K562 (cell line): ENCODE measurements at regions of chr22 and their contacts with region 1.

Region 1: GRCh38 chr22:23539135-23539838 is 40.8 kb downstream of the IGLL1 start:
- DNase-seq: peak; percentile 43 to 82 (median 56)
- ATAC-seq: peak; percentile 95
- H3K4me3 ChIP-seq: no peak overlapping the region
- H3K27ac ChIP-seq: no peak overlapping the region
- H3K4me1 ChIP-seq: peaks cover 26 to 32% of the 10 kb centered on the region in 2 experiments
- H3K27me3 ChIP-seq: no peaks in the 10 kb centered on the region
- CTCF ChIP-seq: peak; percentile 81 to 98 (median 93)
- EP300 ChIP-seq: no peak
- POLR2A ChIP-seq: no peak
- RAD21 ChIP-seq: peak; percentile 89 to 96

Region 2: DNA sequence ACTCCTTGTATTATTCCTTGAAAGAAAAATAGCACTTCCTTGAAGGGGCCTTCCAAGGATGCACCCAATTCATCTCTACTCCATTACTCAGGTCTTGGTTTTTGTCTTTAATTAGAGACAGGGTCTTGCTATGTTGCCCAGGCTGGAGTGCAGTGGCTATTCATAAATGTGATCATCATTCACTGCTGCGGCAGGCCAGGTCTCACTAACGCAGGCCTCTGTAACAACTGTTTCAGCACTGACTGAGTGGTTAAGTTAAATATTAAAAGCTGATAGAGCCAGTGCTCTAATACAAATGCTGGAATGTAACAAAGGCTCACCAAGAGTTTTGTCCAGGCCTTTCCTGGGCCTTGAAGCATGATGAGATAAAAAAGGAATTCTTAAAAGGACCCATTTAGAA is 530.4 kb before region 1 on chr22:
- CTCF ChIA-PET with region 1: no interaction called
- POLR2A ChIA-PET with region 1: no interaction called
- in situ Hi-C with region 1: no loop called
- intact Hi-C with region 1: no loop called
- DNase-seq: no peak
- ATAC-seq: no peak
- H3K4me3 ChIP-seq: no peak overlapping the region
- H3K27ac ChIP-seq: no peak overlapping the region
- H3K4me1 ChIP-seq: no peaks in the 10 kb centered on the region
- H3K27me3 ChIP-seq: peaks cover 16 to 25% of the 10 kb centered on the region in 2 experiments
- CTCF ChIP-seq: no peak
- EP300 ChIP-seq: no peak
- POLR2A ChIP-seq: no peak
- RAD21 ChIP-seq: no peak

Region 3: DNA sequence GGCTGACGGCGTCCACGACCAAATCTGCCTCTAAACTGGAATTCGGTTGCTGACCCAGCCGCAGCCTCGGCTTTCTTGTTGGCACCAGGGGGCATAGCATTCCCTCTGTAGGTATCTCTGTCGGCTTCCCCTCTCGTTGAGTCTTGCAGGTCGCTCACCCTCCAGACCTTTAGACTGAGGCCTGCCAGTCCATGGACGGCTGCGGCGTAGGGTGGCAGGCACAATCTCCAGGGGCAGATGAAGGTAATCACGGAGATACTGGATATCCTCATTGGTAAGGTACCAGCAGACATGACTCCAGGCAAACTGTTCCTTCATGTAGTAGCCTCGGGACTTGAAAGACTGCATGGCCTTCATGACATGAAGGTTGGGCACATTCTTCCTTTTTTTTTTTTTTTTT is 216.7 kb before region 1 on chr22:
- CTCF ChIA-PET with region 1: no interaction called
- POLR2A ChIA-PET with region 1: no interaction called
- in situ Hi-C with region 1: loop called (anchors 10 kb)
- intact Hi-C with region 1: loop called (anchors 5 kb)
- DNase-seq: no peak
- ATAC-seq: no peak
- H3K4me3 ChIP-seq: no peak overlapping the region
- H3K27ac ChIP-seq: no peak overlapping the region
- H3K4me1 ChIP-seq: no peaks in the 10 kb centered on the region
- H3K27me3 ChIP-seq: no peaks in the 10 kb centered on the region
- CTCF ChIP-seq: no peak
- EP300 ChIP-seq: no peak
- POLR2A ChIP-seq: no peak
- RAD21 ChIP-seq: no peak

Region 4: DNA sequence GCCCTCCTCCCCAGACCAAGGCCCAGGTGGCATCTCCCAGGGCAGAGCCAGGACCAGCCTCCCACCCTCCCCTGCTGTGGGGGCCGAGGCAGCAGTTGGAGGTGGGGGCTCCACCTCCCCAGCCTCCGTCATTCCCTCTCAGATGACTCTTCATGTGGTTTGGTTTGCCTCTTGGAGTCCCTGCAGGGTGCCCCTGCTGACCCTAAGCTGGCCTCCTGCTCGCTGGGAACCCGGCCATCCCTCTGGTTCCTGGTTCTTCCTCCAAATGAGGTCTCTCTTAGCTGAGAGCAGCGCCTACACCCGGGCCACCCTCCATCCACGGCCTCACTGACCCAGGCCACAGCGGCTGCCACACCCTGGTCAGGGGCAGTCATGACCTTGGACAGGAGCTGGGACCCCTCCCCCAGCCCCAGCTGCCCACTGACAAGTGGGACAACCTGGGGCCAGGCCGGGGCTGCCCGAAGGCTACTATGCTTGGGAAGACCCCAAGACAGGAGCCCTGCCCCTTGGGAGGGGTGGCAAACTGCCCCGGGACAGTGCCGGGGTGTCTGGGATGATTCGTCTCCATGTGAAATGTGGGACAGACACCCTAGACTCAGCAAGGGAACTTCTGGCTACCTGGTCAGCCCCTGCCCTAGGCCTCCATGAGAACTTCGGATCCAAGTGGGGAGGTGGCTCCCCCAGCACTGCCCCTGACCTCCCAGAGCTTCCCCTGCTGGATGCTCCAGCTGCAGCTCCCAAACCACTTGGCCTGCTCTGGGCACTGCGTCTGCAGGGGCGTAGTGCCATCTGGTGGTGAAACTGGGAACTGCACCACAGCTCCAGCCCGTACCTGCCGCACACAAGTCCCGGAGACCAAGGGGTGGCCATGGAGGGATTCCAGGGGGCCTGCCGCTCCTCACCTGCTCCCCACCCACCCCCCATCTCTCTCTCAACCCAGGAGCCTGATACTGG is 153.7 kb before region 1 on chr22:
- CTCF ChIA-PET with region 1: no interaction called
- POLR2A ChIA-PET with region 1: no interaction called
- in situ Hi-C with region 1: no loop called
- intact Hi-C with region 1: loop called (anchors 5 kb)
- DNase-seq: peak; percentile 74 to 82 (median 80)
- ATAC-seq: peak; percentile 95
- H3K4me3 ChIP-seq: no peak overlapping the region
- H3K27ac ChIP-seq: no peak overlapping the region
- H3K4me1 ChIP-seq: peaks cover 0 to 27% of the 10 kb centered on the region in 2 experiments; a peak in 1 of 5 replicates
- H3K27me3 ChIP-seq: peaks cover 0 to 5% of the 10 kb centered on the region in 2 experiments; a peak in 1 of 5 replicates
- CTCF ChIP-seq: peak; percentile 89 to 97 (median 93)
- EP300 ChIP-seq: no peak
- POLR2A ChIP-seq: no peak
- RAD21 ChIP-seq: peak; percentile 80 to 89

Region 5: DNA sequence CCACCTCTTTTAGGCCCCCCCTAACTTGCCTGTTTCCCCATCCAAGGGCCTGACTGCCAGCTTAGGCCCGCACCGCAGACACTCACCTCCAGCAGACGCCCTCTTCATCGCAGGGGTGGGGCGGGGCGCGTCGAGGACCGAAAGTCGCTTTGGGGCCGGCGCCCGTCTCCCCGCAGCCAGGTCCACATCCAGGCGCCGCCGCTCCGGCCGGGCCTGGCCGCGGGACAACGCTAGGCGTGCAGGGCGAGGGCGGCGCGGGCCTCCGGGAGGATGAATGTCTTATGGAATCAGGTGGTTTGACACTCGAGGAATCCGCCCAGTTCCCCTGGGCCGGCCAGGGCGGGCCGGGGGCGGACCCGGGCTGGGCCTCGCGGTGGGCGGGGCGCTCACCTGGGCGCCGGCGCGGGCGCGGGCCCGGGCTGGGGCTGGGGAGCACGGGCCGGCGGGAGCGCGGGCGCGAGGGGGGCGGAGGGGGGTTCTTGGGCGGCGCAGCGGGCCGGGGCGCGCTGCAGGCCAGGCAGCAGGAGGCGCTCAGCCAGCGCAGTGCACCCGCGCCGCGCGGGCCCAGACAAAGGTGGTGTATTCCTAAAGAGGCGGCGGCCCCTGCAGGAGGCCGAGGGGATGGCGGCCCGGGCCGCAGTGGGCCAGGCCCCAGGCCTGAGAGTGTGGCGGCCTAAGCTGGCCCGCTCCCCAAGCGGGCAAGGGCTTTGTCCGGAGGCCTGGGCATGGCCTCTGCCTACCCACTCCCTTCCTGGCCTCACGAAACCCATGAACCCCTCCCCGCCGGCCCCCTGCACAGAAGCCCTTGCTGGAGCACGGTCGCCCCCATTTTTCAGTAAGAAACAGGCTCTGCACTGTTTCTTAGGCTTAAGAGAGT is 136.8 kb before region 1 on chr22:
- CTCF ChIA-PET with region 1: interaction called, 3 read pairs
- POLR2A ChIA-PET with region 1: no interaction called
- in situ Hi-C with region 1: loop called (anchors 5 kb)
- intact Hi-C with region 1: loop called (anchors 1 kb)
- DNase-seq: peak; percentile 83 to 91 (median 88)
- ATAC-seq: peak; percentile 95
- H3K4me3 ChIP-seq: peak overlapping the region; percentile 34
- H3K27ac ChIP-seq: peak overlapping the region; percentile 79; the same call in 2 of the 3 replicates
- H3K4me1 ChIP-seq: peaks cover 9 to 40% of the 10 kb centered on the region in 2 experiments
- H3K27me3 ChIP-seq: no peaks in the 10 kb centered on the region; a peak in 1 of 5 replicates
- CTCF ChIP-seq: peak; percentile 65 to 98 (median 89)
- EP300 ChIP-seq: no peak
- POLR2A ChIP-seq: no peak
- RAD21 ChIP-seq: peak; percentile 49 to 74

Region 6: GRCh38 chr22:23591201-23591791 is 52.0 kb after region 1 on chr22:
- CTCF ChIA-PET with region 1: interaction called, 6 read pairs
- POLR2A ChIA-PET with region 1: no interaction called
- in situ Hi-C with region 1: loop called (anchors 10 kb)
- intact Hi-C with region 1: loop called (anchors 1 kb)
- DNase-seq: peak; percentile 60 to 67 (median 62)
- ATAC-seq: peak; percentile 92
- H3K4me3 ChIP-seq: no peak overlapping the region
- H3K27ac ChIP-seq: no peak overlapping the region
- H3K4me1 ChIP-seq: no peaks in the 10 kb centered on the region; a peak in 1 of 5 replicates
- H3K27me3 ChIP-seq: no peaks in the 10 kb centered on the region
- CTCF ChIP-seq: peak; percentile 81 to 86 (median 85)
- EP300 ChIP-seq: no peak
- POLR2A ChIP-seq: no peak
- RAD21 ChIP-seq: peak in 1 of 2 experiments; percentile 81; a peak in 2 of 4 replicates

Region 7: GRCh38 chr22:23767673-23768548 is 228.6 kb after region 1 on chr22 and contains the start of gene CHCHD10:
- CTCF ChIA-PET with region 1: no interaction called
- POLR2A ChIA-PET with region 1: no interaction called
- in situ Hi-C with region 1: no loop called
- intact Hi-C with region 1: loop called (anchors 2 kb)
- DNase-seq: peak; percentile 83 to 90 (median 86)
- ATAC-seq: peak; percentile 77
- H3K4me3 ChIP-seq: peak within 1 kb of the TSS; percentile 70
- H3K27ac ChIP-seq: peak within 1 kb of the TSS; percentile 98
- H3K4me1 ChIP-seq: peaks cover 25 to 62% of the 10 kb centered on the region in 2 experiments; a peak in 4 of 5 replicates
- H3K27me3 ChIP-seq: no peaks in the 10 kb centered on the region
- CTCF ChIP-seq: peak; percentile 66 to 73 (median 68)
- EP300 ChIP-seq: no peak
- POLR2A ChIP-seq: peak; percentile 96
- RAD21 ChIP-seq: peak in 1 of 2 experiments; percentile 55; a peak in 2 of 4 replicates
- polyA plus RNA-seq, gene CHCHD10: 15.2 to 41.0 TPM

Region 8: GRCh38 chr22:23849009-23850006 is 310.0 kb after region 1 on chr22:
- CTCF ChIA-PET with region 1: interaction called, 17 read pairs
- POLR2A ChIA-PET with region 1: no interaction called
- in situ Hi-C with region 1: loop called (anchors 5 kb)
- intact Hi-C with region 1: loop called (anchors 5 kb)
- DNase-seq: peak; percentile 78 to 84 (median 82)
- ATAC-seq: peak; percentile 97
- H3K4me3 ChIP-seq: no peak overlapping the region
- H3K27ac ChIP-seq: no peak overlapping the region
- H3K4me1 ChIP-seq: peaks cover 3 to 20% of the 10 kb centered on the region in 2 experiments; a peak in 3 of 5 replicates
- H3K27me3 ChIP-seq: no peaks in the 10 kb centered on the region; a peak in 1 of 5 replicates
- CTCF ChIP-seq: peak; percentile 82 to 91 (median 87)
- EP300 ChIP-seq: no peak
- POLR2A ChIP-seq: no peak
- RAD21 ChIP-seq: peak; percentile 80 to 92